AG04450 (cell line): ENCODE measurements at regions of chr16 and their contacts with region 1.

Region 1: DNA sequence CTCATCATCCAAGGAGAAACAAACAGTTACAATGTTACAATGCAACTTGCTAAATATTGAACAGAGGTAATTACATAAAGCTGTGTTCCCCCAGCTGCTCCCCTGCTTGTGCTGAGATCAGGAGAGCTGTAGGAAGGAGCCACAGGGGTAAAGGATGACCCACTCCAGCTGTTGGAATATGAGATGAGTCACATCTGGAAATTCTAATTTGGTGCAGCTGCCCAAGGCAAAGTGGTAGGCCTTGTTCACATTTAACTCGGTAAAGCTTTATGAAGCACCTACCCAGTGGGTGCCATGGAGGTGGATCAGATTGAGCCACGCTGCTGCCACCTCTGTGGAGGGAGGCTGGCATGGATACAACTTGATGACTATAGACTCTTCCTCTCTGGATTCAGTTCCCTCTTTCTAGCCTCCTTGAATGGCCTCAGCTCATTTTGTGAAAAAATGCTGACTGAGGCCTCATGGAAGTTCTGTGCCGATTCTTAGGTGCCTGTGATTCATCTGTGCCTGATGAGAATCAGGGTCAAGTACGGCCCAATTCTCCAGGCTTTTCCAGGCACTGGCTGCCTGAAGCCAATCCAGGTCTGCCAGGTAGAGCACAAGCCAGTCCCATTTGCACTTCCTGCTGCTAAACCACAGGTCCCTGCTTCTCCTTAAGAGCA is 7.4 kb downstream of the ZNF689 start:
- DNase-seq: no peak
- H3K4me3 ChIP-seq: no peak overlapping the region
- H3K27ac ChIP-seq: peak overlapping the region; percentile 43
- H3K27me3 ChIP-seq: no peaks in the 10 kb centered on the region
- CTCF ChIP-seq: no peak

Region 2: DNA sequence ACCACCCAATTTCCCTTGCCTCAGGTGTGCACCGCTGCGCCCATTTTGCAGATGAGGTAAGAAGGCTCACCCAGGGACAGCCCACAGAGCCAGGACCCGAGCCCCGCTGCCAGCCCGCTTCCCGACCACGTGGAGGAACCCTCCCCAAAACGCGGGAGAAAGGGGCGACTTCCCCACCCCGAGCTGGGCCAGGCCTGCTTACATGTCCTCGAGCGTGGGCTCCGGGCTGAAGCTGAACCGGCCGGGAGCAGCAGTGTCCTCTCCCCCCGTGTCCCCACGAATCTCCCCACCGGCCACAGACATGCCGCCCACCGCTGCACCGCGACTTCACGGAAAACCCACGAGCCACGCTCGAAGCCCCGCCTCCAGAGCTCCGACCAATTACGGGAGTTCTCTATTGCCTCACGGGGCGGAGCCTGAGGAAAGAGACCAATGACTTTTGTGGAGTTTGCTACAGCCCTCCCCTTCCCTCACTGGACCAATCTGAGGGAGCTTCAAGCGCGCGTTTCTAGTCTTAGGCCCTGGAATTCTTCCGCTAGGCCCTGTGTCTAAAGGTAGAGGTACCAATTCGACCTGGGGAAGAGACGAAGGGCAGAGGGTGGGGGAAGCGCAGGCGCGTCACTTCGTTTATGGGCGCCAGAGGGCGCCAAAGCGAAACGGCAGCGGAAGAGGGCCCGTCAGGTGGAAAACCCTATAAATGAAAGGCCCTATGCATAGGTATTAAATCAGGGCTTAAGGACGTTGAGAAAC is 172.9 kb before region 1 on chr16 and contains the start of gene DCTPP1:
- CTCF ChIA-PET with region 1: interaction called, 12 read pairs
- POLR2A ChIA-PET with region 1: no interaction called
- DNase-seq: peak; percentile 91
- H3K4me3 ChIP-seq: peak within 1 kb of the TSS; percentile 93
- H3K27ac ChIP-seq: no peak within 1 kb of the TSS
- H3K27me3 ChIP-seq: no peaks in the 10 kb centered on the region
- CTCF ChIP-seq: peak; percentile 71
- polyA plus RNA-seq, gene DCTPP1: 34.1 and 34.7 TPM in 2 replicates

Region 3: DNA sequence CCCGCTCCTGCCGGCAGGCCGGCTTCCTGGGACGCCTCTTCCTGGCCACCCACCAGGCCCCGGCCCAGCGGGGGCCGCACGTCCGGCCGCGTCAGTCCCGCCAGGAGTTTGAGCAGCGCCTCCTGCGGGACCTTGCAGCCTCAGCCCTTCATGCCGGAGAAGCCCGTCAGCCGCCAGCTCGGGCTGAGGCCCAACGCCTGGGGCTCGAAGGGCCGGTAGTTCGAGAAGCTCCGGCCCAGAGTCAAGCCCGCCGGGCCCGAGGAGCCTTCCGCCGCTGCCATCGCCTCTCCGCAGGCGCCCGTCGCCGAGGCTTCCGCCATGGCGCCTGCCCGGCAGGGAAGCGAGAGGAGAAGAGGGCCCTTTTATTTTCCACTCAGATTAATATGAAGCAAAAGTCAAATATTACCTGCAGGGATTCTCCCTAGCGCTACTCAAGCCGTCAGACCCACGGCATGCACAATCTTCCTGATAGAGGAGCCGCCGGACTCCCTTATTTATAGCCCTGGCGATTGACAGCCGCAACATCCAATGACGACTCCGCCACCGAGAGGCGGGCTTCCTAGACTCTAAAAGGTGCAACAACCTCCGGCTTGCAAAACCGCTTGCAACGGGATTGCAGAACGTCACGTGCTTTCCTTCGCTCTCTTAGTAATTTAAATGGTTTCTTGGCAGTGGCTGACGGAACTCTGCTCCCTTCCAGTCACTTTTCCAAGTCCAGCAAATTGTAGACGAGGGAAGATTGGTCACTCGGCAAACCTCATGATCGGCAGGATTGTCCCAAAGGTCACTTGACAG is 157.1 kb before region 1 on chr16 and contains the start of gene SEPHS2:
- CTCF ChIA-PET with region 1: interaction called, 13 read pairs
- POLR2A ChIA-PET with region 1: no interaction called
- DNase-seq: peak; percentile 92
- H3K4me3 ChIP-seq: peak within 1 kb of the TSS; percentile 83
- H3K27ac ChIP-seq: peak within 1 kb of the TSS; percentile 86
- H3K27me3 ChIP-seq: peaks cover 4% of the 10 kb centered on the region
- CTCF ChIP-seq: peak; percentile 54
- polyA plus RNA-seq, gene SEPHS2: 41.2 and 47.1 TPM in 2 replicates

Region 4: DNA sequence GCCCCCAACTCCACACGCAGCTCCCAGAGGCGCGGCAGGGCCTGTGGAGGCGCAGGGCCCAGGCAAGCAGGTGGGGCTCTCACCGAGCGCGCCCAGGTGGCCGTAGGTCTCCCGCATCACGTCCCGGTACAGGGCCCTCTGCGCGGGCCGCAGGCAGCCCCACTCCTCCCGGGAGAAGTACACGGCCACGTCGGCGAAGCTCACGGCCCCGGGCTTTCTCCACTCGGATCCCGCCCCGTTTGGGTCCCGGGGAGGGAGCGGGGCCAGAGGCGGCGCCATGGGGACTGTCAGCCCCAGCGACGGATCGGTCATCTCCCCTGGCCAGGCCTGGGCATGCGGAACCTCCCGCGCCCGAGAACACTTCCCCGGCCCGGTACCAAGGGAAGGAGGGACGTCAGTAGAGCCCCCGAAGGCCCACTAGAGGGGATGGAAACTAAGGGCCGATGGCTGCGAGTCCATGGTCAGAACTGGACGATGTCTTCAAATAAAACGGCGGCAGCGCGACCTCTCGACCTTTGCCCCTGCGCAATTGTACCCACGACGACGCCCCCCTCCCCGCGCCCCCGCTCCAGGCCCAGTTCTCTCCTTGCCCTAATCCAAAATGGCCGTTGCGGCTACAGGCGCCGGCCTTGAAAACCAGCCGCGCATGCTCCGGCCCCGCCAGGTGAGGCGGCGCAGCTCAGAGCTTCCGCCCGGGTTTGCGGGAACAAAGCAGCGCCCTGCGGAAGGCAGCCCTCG is 68.2 kb before region 1 on chr16 and contains the start of gene ZNF747:
- CTCF ChIA-PET with region 1: interaction called, 11 read pairs
- POLR2A ChIA-PET with region 1: no interaction called
- DNase-seq: no peak
- H3K4me3 ChIP-seq: peak within 1 kb of the TSS; percentile 69
- H3K27ac ChIP-seq: peak within 1 kb of the TSS; percentile 65
- H3K27me3 ChIP-seq: no peaks in the 10 kb centered on the region
- CTCF ChIP-seq: no peak
- polyA plus RNA-seq, gene ZNF747: 4.9 and 5.0 TPM in 2 replicates

Region 5: GRCh38 chr16:30585400-30586189 is 17.2 kb before region 1 on chr16 and contains the start of gene ZNF785:
- CTCF ChIA-PET with region 1: interaction called, 19 read pairs
- POLR2A ChIA-PET with region 1: interaction called, 3 read pairs
- DNase-seq: peak; percentile 96
- H3K4me3 ChIP-seq: peak within 1 kb of the TSS; percentile 78
- H3K27ac ChIP-seq: peak within 1 kb of the TSS; percentile 70
- H3K27me3 ChIP-seq: no peaks in the 10 kb centered on the region
- CTCF ChIP-seq: no peak
- polyA plus RNA-seq, gene ZNF785: 4.7 and 6.6 TPM in 2 replicates

Region 6: DNA sequence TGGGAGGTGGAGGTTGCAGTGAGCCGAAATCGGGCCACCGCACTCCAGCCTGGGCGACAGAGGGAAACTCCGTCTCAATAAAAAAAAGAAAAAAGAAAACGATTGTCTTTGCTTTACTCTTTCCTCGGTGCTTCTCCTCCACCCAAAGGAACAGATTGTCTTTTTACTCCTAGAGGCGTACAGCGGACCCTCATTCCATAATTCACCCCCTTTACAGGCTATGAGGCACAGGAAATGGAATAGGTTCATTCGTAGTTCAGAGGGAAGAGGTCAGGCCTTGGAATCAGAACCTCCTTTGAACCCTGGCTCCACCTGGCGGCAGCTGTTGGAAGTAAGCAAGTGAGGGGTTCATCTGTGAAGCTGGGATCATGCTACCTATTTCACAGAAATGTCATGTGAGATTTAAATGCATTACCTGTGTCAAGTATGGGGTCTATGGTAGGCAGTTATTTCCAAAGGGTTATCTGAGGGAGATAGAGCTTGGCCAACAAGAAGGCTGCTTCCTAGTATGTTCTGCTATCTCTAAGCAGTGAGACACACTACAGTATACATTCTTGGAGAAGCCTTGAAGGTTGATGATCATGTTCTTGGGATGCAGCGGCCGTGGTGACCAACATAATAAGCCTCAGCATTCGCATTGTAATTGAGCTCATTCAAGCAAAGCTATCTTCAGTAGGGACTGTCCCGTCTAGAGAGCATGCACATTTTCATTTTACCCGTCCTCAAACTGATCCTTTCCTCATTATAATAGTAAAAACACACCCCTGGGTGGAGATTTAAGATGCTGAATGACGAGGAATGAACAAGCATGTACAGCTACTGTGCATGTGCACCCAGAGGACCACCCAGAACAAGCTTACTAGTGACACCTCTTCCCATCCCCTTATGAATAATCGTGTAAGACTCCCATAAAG is 26.1 kb after region 1 on chr16:
- CTCF ChIA-PET with region 1: interaction called, 45 read pairs
- POLR2A ChIA-PET with region 1: interaction called, 4 read pairs
- DNase-seq: peak; percentile 43
- H3K4me3 ChIP-seq: no peak overlapping the region
- H3K27ac ChIP-seq: no peak overlapping the region
- H3K27me3 ChIP-seq: peaks cover 5% of the 10 kb centered on the region
- CTCF ChIP-seq: peak; percentile 94